MCF 10A (cell line): ENCODE measurements at regions of chr3 and their contacts with region 1.

Region 1: GRCh38 chr3:29759411-29760225 is 478.7 kb downstream of the RBMS3 start:
- DNase-seq: peak; percentile 90
- H3K4me3 Mint-ChIP-seq: peak overlapping the region; percentile 57
- H3K27ac Mint-ChIP-seq: peak overlapping the region; percentile 95
- H3K4me1 Mint-ChIP-seq: peaks cover 41% of the 10 kb centered on the region
- H3K27me3 Mint-ChIP-seq: no peaks in the 10 kb centered on the region
- CTCF ChIP-seq: no peak

Region 2: DNA sequence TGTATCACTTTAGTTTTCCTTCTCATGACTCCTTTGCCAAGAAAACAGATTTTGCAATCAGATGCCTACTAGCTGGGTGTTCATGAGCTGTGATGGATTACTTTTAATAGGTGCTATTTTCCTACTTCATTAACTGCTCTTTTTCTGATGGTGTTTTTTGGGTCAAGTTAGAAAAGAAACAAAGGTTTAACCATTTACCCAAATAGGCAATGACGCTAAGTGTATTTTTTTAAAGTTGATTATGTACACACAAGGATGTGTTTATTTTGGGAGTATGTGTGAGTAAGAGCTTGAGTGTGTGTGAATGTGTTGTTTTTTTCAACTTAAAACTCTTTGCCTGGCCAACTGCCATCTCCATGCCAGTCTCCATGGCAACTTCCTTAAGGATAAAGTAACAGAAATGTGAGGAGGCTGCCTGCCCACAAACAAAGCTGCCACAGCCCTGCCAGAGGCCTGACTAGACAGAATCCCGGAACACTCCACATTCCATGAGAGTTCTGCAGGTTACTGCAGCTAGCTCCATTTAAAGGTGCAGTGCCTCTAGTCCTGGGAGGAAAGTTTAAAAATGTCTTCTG is 694.3 kb before region 1 on chr3:
- CTCF ChIA-PET with region 1: no interaction called
- POLR2A ChIA-PET with region 1: interaction called, 10 read pairs
- intact Hi-C with region 1: loop called (anchors 2 kb)
- DNase-seq: peak; percentile 98
- H3K4me3 Mint-ChIP-seq: peak overlapping the region; percentile 49
- H3K27ac Mint-ChIP-seq: peak overlapping the region; percentile 94
- H3K4me1 Mint-ChIP-seq: peaks cover 25% of the 10 kb centered on the region
- H3K27me3 Mint-ChIP-seq: no peaks in the 10 kb centered on the region
- CTCF ChIP-seq: no peak

Region 3: DNA sequence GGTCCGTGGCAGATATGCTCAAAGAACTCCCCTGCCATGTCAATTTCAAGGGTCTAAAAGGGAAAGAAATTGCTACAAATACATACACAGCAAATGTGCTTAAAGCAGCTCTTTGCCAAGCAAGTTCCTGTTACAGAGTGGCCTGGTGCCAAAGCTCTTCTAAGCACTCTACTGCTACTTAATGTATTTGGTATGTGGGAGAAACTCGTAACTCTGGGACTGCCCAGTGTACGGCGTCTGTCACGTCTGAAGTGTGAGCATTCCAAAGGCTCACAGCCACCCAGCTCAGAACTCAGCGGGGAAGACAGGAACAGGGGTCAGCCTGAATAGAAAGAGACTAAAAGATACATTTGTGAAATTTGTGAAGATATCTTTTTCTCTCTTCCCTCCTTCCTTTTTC is 424.2 kb before region 1 on chr3:
- CTCF ChIA-PET with region 1: interaction called, 4 read pairs
- POLR2A ChIA-PET with region 1: interaction called, 17 read pairs
- intact Hi-C with region 1: loop called (anchors 1 kb)
- DNase-seq: peak; percentile 95
- H3K4me3 Mint-ChIP-seq: peak overlapping the region; percentile 74
- H3K27ac Mint-ChIP-seq: peak overlapping the region; percentile 98
- H3K4me1 Mint-ChIP-seq: peaks cover 32% of the 10 kb centered on the region
- H3K27me3 Mint-ChIP-seq: no peaks in the 10 kb centered on the region
- CTCF ChIP-seq: no peak

Region 4: DNA sequence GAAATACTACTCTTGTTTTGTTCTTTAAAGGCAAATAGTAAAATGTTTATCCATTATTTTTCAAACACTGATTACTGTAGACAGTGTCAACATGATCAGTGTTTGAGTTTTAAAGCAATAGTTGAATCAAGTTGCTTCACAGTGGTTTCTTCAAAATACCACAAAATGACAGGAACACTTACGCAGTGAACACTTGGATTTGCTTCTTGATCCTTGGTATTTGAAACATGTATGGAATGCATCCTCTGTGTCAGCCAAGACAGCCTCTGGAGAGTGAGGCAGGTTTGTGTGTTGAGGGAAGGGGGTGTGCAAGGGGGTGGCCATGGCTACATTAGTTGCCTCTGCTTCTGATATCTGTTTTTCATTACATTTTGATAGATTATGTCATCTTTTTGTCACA is 65.8 kb before region 1 on chr3:
- CTCF ChIA-PET with region 1: interaction called, 4 read pairs
- POLR2A ChIA-PET with region 1: interaction called, 50 read pairs
- intact Hi-C with region 1: loop called (anchors 1 kb)
- DNase-seq: peak; percentile 89
- H3K4me3 Mint-ChIP-seq: peak overlapping the region; percentile 43
- H3K27ac Mint-ChIP-seq: peak overlapping the region; percentile 91
- H3K4me1 Mint-ChIP-seq: peaks cover 44% of the 10 kb centered on the region
- H3K27me3 Mint-ChIP-seq: no peaks in the 10 kb centered on the region
- CTCF ChIP-seq: no peak

Region 5: DNA sequence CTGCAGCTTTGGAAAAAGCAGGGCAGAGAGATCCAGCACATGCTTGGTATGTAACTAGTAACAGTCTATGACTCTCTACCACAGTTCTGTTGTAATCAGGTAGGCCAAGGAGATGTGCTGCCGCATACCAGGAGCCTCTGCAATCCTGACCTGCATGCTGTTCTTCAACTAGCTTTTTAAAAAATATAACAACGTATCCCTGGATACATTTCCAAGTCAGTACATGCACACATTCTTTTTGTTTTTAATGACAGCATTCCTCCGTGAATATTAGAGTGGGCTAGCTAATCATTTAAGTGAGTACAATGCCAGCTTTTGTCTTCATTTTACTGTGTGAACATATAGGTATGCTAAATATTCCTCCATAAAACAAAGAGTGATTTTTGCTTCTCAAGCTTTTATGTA is 41.0 kb before region 1 on chr3:
- CTCF ChIA-PET with region 1: interaction called, 3 read pairs
- POLR2A ChIA-PET with region 1: interaction called, 11 read pairs
- intact Hi-C with region 1: no loop called
- DNase-seq: peak; percentile 6
- H3K4me3 Mint-ChIP-seq: no peak overlapping the region
- H3K27ac Mint-ChIP-seq: peak overlapping the region; percentile 49
- H3K4me1 Mint-ChIP-seq: peaks cover 20% of the 10 kb centered on the region
- H3K27me3 Mint-ChIP-seq: no peaks in the 10 kb centered on the region
- CTCF ChIP-seq: no peak

Region 6: GRCh38 chr3:29746163-29746562 is 13.5 kb before region 1 on chr3:
- CTCF ChIA-PET with region 1: interaction called, 4 read pairs
- POLR2A ChIA-PET with region 1: interaction called, 10 read pairs
- intact Hi-C with region 1: no loop called
- DNase-seq: peak; percentile 8
- H3K4me3 Mint-ChIP-seq: no peak overlapping the region
- H3K27ac Mint-ChIP-seq: peak overlapping the region; percentile 44
- H3K4me1 Mint-ChIP-seq: peaks cover 19% of the 10 kb centered on the region
- H3K27me3 Mint-ChIP-seq: no peaks in the 10 kb centered on the region
- CTCF ChIP-seq: no peak